Uterus (tissue), 4 donors: ENCODE measurements at regions of chr1 and their contacts with region 1.

Region 1: DNA sequence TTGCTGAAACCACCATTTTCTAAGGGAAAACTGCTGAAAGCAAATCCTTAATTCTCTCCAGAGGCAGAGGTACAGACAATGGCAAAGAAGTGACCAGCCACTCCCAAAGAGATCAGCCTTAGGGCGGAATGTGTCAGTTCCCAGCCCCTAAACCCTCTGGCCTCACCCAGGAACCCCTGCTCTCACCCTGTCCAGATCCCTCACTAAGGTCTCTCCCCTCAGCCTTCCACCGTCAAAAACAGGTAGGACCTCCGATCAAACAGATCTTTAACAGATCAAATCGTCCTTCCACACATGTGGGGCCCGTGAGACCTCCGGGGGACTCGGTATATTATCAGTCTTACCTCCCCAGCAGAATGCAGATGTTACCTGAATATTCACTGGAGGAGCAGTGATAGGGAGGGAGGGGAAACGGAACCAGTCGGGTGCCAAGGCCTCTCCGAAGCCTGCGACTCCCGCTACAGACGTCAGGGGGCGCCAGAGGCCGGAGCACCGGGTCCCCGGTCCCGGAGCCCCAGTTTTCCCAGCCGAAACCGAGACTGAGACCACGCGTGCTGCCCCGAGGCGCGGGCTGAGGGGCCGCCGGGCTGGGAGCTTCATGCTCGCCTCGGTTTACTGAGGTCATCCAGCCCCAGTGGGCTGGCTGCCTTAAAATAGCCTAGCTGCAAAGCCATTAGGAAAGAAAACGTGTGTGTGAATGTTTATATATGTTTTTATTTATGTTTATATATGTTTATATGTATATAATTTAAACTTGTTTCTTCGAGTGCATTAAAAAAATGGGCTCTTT is 23.6 kb downstream of the GPA33 start:
- DNase-seq: peak; percentile 58 to 74
- H3K4me3 ChIP-seq: no peak overlapping the region
- H3K27ac ChIP-seq: no peak overlapping the region
- H3K4me1 ChIP-seq: no peaks in the 10 kb centered on the region
- H3K27me3 ChIP-seq: no peaks in the 10 kb centered on the region
- CTCF ChIP-seq: peak; percentile 90 to 94 (median 92)
- POLR2A ChIP-seq: no peak

Region 2: GRCh38 chr1:166902271-166902670 is 164.3 kb before region 1 on chr1:
- intact Hi-C with region 1: loop called (anchors 10 kb)
- DNase-seq: no peak
- H3K4me3 ChIP-seq: no peak overlapping the region
- H3K27ac ChIP-seq: no peak overlapping the region
- H3K4me1 ChIP-seq: no peaks in the 10 kb centered on the region
- H3K27me3 ChIP-seq: no peaks in the 10 kb centered on the region
- CTCF ChIP-seq: no peak
- POLR2A ChIP-seq: no peak

Region 3: DNA sequence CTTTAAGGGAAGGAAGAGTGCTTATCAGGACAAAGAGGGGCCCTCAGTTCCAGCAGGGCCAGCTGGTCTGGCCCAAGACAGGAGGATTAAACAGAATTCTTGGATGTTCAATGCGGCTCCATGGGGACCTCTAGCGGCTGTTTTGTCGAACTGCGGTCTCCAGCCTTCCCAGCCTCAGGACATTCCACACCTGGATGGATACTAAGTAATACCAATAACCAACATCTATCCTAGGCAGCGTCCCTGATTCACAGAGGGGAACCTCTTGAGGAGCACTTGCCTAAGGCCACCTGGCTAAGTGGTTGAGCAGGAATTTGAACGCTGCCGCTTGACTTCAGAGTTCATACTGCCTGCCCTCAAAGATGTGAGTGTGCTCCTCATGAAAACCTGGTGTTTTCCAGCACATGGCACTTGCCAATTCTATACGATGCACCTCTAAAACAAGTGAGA is 467.3 kb after region 1 on chr1:
- intact Hi-C with region 1: loop called (anchors 10 kb)
- DNase-seq: peak; percentile 44 to 67
- H3K4me3 ChIP-seq: no peak overlapping the region
- H3K27ac ChIP-seq: no peak overlapping the region
- H3K4me1 ChIP-seq: no peaks in the 10 kb centered on the region
- H3K27me3 ChIP-seq: no peaks in the 10 kb centered on the region
- CTCF ChIP-seq: peak; percentile 58 to 78 (median 64)
- POLR2A ChIP-seq: no peak